ENCODE measurements at regions of chr19 and their contacts with region 1.

Region 1: GRCh38 chr19:40055832-40056504 is at the start of gene ZNF780B:
- DNase-seq: peak; percentile 61
- H3K4me3 ChIP-seq: peak within 1 kb of the TSS; percentile 11 to 91 (median 51)
- H3K27ac ChIP-seq: no peak within 1 kb of the TSS
- H3K4me1 ChIP-seq: peaks cover 6% of the 10 kb centered on the region
- H3K27me3 ChIP-seq: peaks cover 0 to 13% of the 10 kb centered on the region in 2 experiments
- CTCF ChIP-seq: no peak
- POLR2A ChIP-seq: no peak
- total RNA-seq, gene ZNF780B: 13.0 and 13.5 TPM in 2 replicates

Region 2: DNA sequence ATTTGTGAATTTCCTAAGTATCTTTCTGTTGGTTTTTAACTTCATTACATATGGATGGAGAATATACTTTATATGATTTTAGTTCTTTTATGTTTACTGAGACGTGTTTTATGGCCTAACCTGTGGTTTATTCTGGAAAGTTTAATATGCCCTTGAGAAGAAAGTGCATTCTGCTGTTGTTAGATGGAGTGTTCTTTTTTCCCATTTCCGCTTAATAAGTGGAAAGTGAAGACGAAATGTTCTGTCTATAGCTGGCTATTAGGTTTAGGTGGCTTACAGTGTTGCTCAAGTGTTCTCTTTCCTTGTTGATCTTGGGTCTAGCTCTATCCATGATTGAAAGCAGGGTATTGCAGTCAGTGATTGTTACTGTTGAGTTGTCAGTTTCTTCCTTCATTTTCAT is 592.6 kb before region 1 on chr19:
- CTCF ChIA-PET with region 1: no interaction called
- POLR2A ChIA-PET with region 1: no interaction called
- dilution Hi-C with region 1: no loop called
- intact Hi-C with region 1: no loop called
- DNase-seq: no peak
- H3K4me3 ChIP-seq: no peak overlapping the region
- H3K27ac ChIP-seq: no peak overlapping the region
- H3K4me1 ChIP-seq: no peaks in the 10 kb centered on the region
- H3K27me3 ChIP-seq: no peaks in the 10 kb centered on the region
- CTCF ChIP-seq: no peak
- POLR2A ChIP-seq: no peak

Region 3: DNA sequence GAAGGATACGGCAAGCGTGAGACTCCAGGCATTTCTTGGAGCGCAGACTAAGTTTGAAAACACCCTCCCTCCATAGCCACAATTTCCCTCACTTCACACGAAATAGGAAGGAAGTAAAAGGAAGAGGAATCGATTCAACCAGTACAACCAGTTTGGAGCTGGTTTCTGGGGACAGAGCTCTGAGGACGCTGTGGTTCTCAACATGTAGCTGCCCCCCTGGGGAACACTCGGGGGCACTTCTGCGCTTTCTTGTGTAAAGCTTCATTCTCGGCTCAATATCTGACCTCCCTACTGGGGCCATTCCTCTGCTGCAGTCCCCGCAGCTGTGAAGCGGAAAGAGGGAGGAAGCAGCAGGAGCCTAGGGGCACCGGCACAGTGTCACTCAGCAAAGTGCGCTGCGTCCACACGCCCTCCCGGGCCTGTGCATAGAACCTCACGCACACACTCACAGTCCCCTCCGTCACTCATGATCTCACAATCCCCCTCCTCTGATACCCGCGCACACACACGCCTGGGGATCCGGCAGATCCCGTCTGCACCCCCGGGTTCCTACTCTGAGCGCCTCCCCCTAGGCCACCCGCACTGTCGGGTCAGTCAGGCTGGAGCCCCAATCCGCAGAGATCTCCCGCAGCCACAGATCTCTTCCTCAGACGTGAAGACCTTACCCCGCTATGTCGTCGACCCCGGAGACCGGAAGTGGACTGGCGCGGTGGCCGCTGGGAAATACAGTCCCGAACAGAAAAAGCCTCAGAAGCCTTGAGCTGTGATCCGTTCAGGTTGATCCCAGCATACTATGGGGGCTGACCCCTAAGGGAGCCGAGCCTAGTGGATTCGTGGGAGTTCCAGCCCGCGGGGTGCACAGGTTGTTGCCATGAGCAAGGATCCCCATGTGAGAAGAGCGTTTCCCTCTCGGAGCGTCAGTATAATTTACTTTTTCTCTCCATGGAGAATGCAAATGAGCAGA is 34.6 kb after region 1 on chr19 and contains the start of gene ZNF780A:
- CTCF ChIA-PET with region 1: interaction called, 3 read pairs
- POLR2A ChIA-PET with region 1: no interaction called
- dilution Hi-C with region 1: no loop called
- intact Hi-C with region 1: loop called (anchors 5 kb)
- DNase-seq: peak; percentile 80
- H3K4me3 ChIP-seq: peak within 1 kb of the TSS; percentile 46 to 86 (median 72)
- H3K27ac ChIP-seq: peak within 1 kb of the TSS; percentile 67
- H3K4me1 ChIP-seq: peaks cover 9% of the 10 kb centered on the region
- H3K27me3 ChIP-seq: no peaks in the 10 kb centered on the region
- CTCF ChIP-seq: no peak
- POLR2A ChIP-seq: peak; percentile 20
- total RNA-seq, gene ZNF780A: 9.9 and 11.6 TPM in 2 replicates

Measured in endothelial cell of umbilical vein (primary cell).